Aorta (tissue), 5 donors: ENCODE measurements at regions of chr1 and their contacts with region 1.

Region 1: GRCh38 chr1:158020887-158021620 is 27.6 kb downstream of the KIRREL1 start:
- DNase-seq: no peak
- ATAC-seq: no peak
- H3K4me3 ChIP-seq: no peak overlapping the region
- H3K27ac ChIP-seq: peak overlapping the region; percentile 69 to 93
- H3K4me1 ChIP-seq: peaks cover 6 to 12% of the 10 kb centered on the region in 2 donors
- H3K27me3 ChIP-seq: no peaks in the 10 kb centered on the region

Region 2: DNA sequence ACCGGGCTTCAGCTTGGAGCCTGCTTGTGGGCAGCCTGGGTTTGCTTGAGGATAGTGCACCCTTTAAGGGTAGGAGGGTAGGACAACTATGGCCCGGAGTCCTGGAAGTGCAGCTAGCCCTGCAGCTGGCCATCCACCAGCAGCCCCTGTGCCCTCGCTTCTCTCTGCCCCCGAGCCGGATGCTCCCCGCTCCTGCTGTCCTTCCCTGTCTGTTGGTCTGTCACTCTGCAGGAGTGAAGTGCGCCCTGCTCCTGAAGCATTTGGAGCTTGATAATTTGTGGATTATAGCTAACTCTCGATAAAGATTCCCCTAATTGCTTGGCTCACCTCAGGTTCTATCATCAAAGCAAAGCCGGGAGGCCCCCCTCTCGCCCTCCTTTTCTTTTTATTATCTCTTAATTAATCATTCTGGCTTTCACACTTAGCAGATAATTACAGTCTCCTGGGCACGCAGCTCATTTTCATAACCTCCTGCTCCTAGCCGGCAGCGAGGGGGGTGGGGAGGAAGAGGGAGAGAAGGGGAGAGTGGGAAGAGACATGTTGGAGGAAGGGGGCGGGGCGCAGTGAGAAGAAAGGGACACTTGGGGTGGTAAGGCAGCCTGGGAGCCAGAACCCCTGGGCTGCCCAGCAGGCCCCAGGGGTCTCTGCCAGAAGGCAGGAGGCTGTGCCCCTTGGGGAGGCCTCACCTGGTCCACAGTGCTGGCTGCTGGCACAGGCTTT is 13.2 kb before region 1 on chr1:
- intact Hi-C with region 1: loop called in 1 of 2 experiments (anchors 2 kb)
- DNase-seq: no peak
- ATAC-seq: no peak
- H3K4me3 ChIP-seq: no peak overlapping the region
- H3K27ac ChIP-seq: peak overlapping the region; percentile 90 to 99
- H3K4me1 ChIP-seq: peaks cover 6 to 25% of the 10 kb centered on the region in 2 donors
- H3K27me3 ChIP-seq: no peaks in the 10 kb centered on the region